HCT116 (cell line): ENCODE measurements at regions of chr6 and their contacts with region 1.

Region 1: DNA sequence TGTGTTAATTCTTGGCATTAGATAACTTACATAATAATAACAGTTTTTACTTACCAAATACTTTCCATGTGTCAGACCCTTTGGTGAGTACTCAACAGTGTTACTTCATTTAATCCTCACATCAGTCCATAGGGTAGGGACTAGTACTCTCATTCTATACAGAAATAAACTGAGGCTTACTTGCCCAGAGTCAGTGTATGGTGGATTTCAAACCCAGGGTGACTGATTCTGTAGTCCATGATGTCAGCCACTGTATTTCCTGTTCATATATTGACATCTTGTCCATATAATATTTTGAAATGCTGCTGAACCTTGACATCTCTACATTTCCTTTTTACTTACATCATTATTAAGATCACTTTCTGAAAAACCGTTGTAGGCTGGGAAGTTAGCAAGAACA is 2.5 kb upstream of the PNLDC1 start:
- DNase-seq: no peak
- ATAC-seq: no peak
- H3K4me3 ChIP-seq: no peak overlapping the region
- H3K27ac ChIP-seq: no peak overlapping the region
- H3K4me1 ChIP-seq: no peaks in the 10 kb centered on the region
- H3K27me3 ChIP-seq: no peaks in the 10 kb centered on the region
- CTCF ChIP-seq: no peak
- POLR2A ChIP-seq: no peak
- RAD21 ChIP-seq: no peak

Region 2: DNA sequence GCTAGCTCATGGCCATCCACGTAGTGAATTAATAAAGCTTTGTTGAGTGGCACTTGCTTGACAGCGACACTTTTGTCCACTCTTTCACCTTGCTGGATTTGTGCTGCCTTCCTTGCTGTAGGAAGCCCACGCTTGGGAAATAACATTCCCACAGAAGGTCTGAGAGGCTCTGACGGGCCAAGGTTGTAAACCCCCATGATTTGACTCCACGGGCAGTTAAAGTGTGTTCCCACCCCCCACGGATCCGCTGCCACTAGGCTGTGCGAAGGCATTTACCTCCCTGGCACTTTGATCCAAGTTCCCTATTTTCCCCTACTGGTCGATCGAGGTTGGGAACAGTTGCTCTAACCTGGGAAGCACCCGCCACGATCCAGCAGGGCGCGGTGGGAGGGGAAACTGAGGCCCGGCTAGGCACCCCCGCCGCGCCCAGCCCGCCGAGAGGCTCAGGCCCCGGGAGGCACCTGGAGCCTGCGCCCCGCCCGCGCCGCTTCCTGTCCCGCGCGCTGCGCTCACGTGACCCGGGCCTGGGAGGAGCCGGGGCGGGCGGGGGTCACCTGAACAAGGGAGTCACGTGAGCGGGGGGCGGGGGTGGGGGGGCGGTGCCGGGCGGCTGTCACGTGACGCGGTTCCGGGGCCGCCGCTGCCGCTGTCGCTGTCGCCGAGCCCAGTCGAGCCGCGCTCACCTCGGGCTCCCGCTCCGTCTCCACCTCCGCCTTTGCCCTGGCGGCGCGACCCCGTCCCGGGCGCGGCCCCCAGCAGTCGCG is 171.1 kb after region 1 on chr6 and contains the start of gene IGF2R:
- CTCF ChIA-PET with region 1: no interaction called
- POLR2A ChIA-PET with region 1: no interaction called
- RAD21 ChIA-PET with region 1: no interaction called
- intact Hi-C with region 1: loop called (anchors 5 kb)
- DNase-seq: peak; percentile 62
- ATAC-seq: peak; percentile 92
- H3K4me3 ChIP-seq: peak within 1 kb of the TSS; percentile 64 to 76
- H3K27ac ChIP-seq: peak within 1 kb of the TSS; percentile 65
- H3K4me1 ChIP-seq: peaks cover 8 to 20% of the 10 kb centered on the region in 2 experiments; a peak in 2 of 4 replicates
- H3K27me3 ChIP-seq: peaks cover 4% of the 10 kb centered on the region; the same call in 1 of the 2 replicates
- CTCF ChIP-seq: no peak
- POLR2A ChIP-seq: peak; percentile 74
- RAD21 ChIP-seq: no peak
- total RNA-seq, gene IGF2R: 37.0 TPM

Region 3: DNA sequence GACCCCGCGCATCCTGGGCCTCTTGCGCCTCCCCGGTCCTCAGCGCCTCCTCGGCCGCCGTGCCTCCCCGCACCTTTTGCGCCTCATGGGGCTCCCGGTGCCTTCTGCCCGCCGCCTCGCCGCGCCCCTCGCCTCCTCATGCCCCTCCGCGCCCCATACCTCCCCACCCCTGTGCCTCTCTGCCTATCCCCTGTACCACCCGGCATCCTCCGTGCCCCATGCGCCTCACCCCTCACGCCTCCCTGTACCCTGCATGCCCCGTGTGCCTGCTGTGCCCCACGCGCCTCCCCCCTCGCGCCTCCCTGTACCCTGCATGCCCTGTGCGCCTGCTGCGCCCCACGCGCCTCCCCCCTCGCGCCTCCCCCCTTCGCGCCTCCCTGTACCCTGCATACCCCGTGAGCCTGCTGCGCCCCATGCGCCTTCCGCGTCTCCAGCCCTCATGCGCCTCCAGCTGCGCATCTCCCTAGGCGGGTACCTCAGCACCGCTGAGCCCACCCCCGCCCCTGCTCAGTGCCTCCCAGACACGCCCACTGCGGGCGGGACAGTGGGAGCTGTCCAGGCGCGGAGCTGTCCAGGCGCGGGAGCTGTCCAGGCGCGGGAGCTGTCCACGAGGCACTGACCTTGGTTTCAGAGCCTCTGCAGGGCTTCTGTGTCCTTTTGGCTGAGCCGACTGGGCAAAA is 208.4 kb after region 1 on chr6:
- CTCF ChIA-PET with region 1: no interaction called
- POLR2A ChIA-PET with region 1: no interaction called
- RAD21 ChIA-PET with region 1: no interaction called
- intact Hi-C with region 1: no loop called
- DNase-seq: no peak
- ATAC-seq: no peak
- H3K4me3 ChIP-seq: no peak overlapping the region
- H3K27ac ChIP-seq: no peak overlapping the region
- H3K4me1 ChIP-seq: no peaks in the 10 kb centered on the region
- H3K27me3 ChIP-seq: no peaks in the 10 kb centered on the region
- CTCF ChIP-seq: no peak
- POLR2A ChIP-seq: no peak
- RAD21 ChIP-seq: no peak